Activated CD4-positive, alpha-beta memory T cell treated with anti-CD3 and anti-CD28 coated beads for 36 hours (primary cell): ENCODE measurements at regions of chr5 and their contacts with region 1.

Region 1: GRCh38 chr5:154857530-154858296 is 714 bp upstream of the CNOT8 start:
- DNase-seq: peak; percentile 88
- H3K4me3 Mint-ChIP-seq: peak overlapping the region; percentile 86
- H3K27ac Mint-ChIP-seq: peak overlapping the region; percentile 100
- H3K4me1 Mint-ChIP-seq: peaks cover 38% of the 10 kb centered on the region
- H3K27me3 Mint-ChIP-seq: no peaks in the 10 kb centered on the region

Region 2: GRCh38 chr5:154189819-154190594 is 667.7 kb before region 1 on chr5:
- CTCF ChIA-PET with region 1: no interaction called
- POLR2A ChIA-PET with region 1: no interaction called
- intact Hi-C with region 1: loop called (anchors 10 kb)
- DNase-seq: peak; percentile 83
- H3K4me3 Mint-ChIP-seq: peak overlapping the region; percentile 80
- H3K27ac Mint-ChIP-seq: peak overlapping the region; percentile 55
- H3K4me1 Mint-ChIP-seq: peaks cover 39% of the 10 kb centered on the region
- H3K27me3 Mint-ChIP-seq: peaks cover 5% of the 10 kb centered on the region

Region 3: DNA sequence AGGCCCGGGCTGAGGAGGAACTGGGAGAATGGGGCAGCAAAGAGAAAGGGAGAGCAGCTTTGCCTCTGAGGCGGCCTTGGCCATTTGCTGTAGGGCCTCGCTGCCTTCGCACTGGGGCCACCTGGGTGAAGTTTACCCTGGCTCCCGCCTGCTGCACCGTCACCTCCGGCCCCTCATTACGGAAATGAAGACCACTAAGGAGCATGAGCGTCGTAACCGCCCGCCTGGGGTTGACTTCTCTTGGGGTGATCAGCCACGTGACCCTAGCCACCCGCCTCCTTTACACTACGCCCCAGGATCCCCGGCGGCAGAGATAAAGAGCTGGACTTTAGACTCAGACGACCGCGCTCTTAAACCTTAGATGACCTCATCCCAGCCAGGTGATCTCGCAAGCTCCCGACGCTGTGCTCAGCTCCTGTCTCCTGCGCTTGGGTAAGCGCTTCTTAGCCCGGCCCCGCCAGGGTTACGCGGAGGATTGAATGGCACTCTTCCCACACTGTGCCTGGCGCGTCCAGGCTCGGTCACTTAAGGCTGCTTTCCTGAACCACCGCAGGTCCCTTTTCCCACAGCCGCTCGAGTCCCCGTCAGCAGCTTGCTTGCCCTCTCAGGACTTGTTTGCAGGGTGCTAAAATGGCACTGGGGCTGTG is 210.5 kb before region 1 on chr5:
- CTCF ChIA-PET with region 1: interaction called, 12 read pairs
- POLR2A ChIA-PET with region 1: no interaction called
- intact Hi-C with region 1: loop called (anchors 1 kb)
- DNase-seq: peak; percentile 15
- H3K4me3 Mint-ChIP-seq: peak overlapping the region; percentile 44
- H3K27ac Mint-ChIP-seq: no peak overlapping the region
- H3K4me1 Mint-ChIP-seq: peaks cover 12% of the 10 kb centered on the region
- H3K27me3 Mint-ChIP-seq: peaks cover 19% of the 10 kb centered on the region

Region 4: DNA sequence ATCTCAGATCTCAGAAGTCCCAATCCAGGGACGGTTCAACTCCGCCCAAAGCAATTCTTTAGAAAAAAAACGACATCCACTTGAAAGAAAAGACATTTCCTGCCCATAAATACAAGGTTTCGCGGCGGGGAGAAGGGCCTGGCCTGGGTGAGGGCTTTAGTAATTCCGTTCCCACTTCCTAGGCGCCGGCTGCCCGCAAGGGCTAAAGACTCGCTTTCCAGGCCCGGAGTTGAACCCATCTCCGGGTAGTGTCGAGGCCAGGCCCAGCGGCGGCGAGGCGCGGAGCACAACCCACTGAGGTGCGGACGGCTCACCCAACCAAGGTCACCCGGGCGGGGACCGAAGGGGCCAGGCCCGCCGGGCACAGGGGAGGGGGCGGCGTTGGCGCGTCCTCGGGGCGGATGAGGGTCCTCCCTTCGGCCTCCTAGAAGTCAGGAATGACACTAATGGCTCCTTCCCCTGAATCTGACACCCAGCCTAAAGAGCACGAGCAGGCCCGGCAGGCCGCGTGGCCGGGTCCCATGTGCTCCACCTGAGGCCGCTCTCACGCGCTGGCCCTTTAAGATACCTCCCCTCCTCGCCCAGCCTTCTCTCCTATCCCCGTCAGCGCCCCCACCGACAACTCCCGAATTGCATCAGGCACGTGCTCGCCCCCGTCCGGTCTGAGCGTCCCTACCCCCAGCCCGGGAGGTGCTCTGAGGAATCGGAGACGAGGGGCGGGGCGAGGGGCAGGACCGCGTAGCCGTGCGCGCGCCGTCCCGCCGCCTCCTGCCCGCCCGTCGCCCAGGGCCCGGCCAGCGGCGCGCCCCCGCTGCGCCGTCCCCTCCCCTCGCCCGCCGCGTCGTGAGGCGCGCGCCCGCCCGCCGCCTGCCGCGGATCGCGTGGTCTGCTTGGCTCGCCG is 103.0 kb before region 1 on chr5:
- CTCF ChIA-PET with region 1: no interaction called
- POLR2A ChIA-PET with region 1: interaction called, 9 read pairs
- intact Hi-C with region 1: loop called (anchors 1 kb)
- DNase-seq: peak; percentile 99
- H3K4me3 Mint-ChIP-seq: peak overlapping the region; percentile 89
- H3K27ac Mint-ChIP-seq: peak overlapping the region; percentile 99
- H3K4me1 Mint-ChIP-seq: peaks cover 33% of the 10 kb centered on the region
- H3K27me3 Mint-ChIP-seq: no peaks in the 10 kb centered on the region

Region 5: GRCh38 chr5:154940772-154941620 is 83.3 kb after region 1 on chr5 and contains the start of gene MRPL22:
- CTCF ChIA-PET with region 1: no interaction called
- POLR2A ChIA-PET with region 1: interaction called, 9 read pairs
- intact Hi-C with region 1: loop called (anchors 1 kb)
- DNase-seq: peak; percentile 97
- H3K4me3 Mint-ChIP-seq: peak within 1 kb of the TSS; percentile 96
- H3K27ac Mint-ChIP-seq: peak within 1 kb of the TSS; percentile 93
- H3K4me1 Mint-ChIP-seq: peaks cover 35% of the 10 kb centered on the region
- H3K27me3 Mint-ChIP-seq: no peaks in the 10 kb centered on the region
- total RNA-seq, gene MRPL22: 80.8 to 82.2 TPM

Region 6: GRCh38 chr5:155136216-155136850 is 278.6 kb after region 1 on chr5:
- CTCF ChIA-PET with region 1: no interaction called
- POLR2A ChIA-PET with region 1: no interaction called
- intact Hi-C with region 1: no loop called
- DNase-seq: no peak
- H3K4me3 Mint-ChIP-seq: no peak overlapping the region
- H3K27ac Mint-ChIP-seq: no peak overlapping the region
- H3K4me1 Mint-ChIP-seq: no peaks in the 10 kb centered on the region
- H3K27me3 Mint-ChIP-seq: peaks cover 25% of the 10 kb centered on the region